ENCODE measurements at regions of chr1 and their contacts with region 1.

Region 1: GRCh38 chr1:185987611-185988321 is 253.6 kb downstream of the HMCN1 start:
- DNase-seq: peak; percentile 44
- H3K4me3 Mint-ChIP-seq: peak overlapping the region; percentile 69
- H3K27ac Mint-ChIP-seq: peak overlapping the region; percentile 98
- H3K4me1 Mint-ChIP-seq: peaks cover 15% of the 10 kb centered on the region
- H3K27me3 Mint-ChIP-seq: no peaks in the 10 kb centered on the region

Region 2: DNA sequence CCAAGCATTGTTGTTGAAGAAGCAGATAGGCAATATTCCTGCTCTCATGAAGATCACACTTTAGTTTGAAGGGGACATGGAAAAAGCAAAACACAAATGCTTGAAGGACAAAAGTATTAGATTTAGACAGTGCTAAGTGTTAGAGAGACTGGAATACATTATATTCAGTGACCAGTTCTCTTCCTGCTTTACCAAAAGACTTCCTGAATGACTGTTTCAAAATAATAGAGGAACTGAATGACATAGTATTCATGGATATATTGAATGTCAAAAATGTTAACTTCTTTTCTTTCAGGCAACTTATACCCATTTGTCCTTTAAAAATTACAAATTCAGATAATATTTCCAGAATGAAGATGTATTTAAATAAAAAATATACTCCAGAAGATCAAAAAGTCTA is 492.8 kb before region 1 on chr1:
- CTCF ChIA-PET with region 1: no interaction called
- intact Hi-C with region 1: no loop called
- DNase-seq: no peak
- H3K4me3 Mint-ChIP-seq: no peak overlapping the region
- H3K27ac Mint-ChIP-seq: no peak overlapping the region
- H3K4me1 Mint-ChIP-seq: peaks cover 4% of the 10 kb centered on the region
- H3K27me3 Mint-ChIP-seq: no peaks in the 10 kb centered on the region

Region 3: GRCh38 chr1:185585770-185586169 is 402.0 kb before region 1 on chr1:
- CTCF ChIA-PET with region 1: no interaction called
- intact Hi-C with region 1: no loop called
- DNase-seq: no peak
- H3K4me3 Mint-ChIP-seq: no peak overlapping the region
- H3K27ac Mint-ChIP-seq: no peak overlapping the region
- H3K4me1 Mint-ChIP-seq: no peaks in the 10 kb centered on the region
- H3K27me3 Mint-ChIP-seq: no peaks in the 10 kb centered on the region

Region 4: GRCh38 chr1:186009039-186009737 is 21.4 kb after region 1 on chr1:
- CTCF ChIA-PET with region 1: no interaction called
- intact Hi-C with region 1: loop called (anchors 1 kb)
- DNase-seq: no peak
- H3K4me3 Mint-ChIP-seq: no peak overlapping the region
- H3K27ac Mint-ChIP-seq: peak overlapping the region; percentile 53
- H3K4me1 Mint-ChIP-seq: peaks cover 4% of the 10 kb centered on the region
- H3K27me3 Mint-ChIP-seq: no peaks in the 10 kb centered on the region

Region 5: DNA sequence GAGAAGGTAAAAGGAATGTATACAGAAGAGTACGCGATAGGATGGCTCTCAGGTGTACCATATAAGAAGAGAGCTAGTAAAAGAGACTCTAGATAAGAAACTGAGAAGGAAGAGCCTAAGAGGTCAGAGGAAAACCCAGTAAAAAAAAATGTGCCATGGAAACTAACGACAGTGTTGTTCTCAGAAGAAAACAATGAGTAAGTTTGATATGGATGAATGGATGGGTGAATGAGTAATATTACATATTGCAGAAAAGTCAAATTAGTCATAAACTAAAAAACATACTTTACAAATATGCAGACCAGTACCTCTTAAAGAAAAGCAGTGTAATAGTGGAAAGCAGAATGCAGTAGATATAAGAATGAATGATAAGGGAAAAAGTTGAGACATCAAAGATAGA is 62.6 kb after region 1 on chr1:
- CTCF ChIA-PET with region 1: no interaction called
- intact Hi-C with region 1: loop called (anchors 1 kb)
- DNase-seq: no peak
- H3K4me3 Mint-ChIP-seq: no peak overlapping the region
- H3K27ac Mint-ChIP-seq: no peak overlapping the region
- H3K4me1 Mint-ChIP-seq: peaks cover 7% of the 10 kb centered on the region
- H3K27me3 Mint-ChIP-seq: peaks cover 3% of the 10 kb centered on the region

Region 6: DNA sequence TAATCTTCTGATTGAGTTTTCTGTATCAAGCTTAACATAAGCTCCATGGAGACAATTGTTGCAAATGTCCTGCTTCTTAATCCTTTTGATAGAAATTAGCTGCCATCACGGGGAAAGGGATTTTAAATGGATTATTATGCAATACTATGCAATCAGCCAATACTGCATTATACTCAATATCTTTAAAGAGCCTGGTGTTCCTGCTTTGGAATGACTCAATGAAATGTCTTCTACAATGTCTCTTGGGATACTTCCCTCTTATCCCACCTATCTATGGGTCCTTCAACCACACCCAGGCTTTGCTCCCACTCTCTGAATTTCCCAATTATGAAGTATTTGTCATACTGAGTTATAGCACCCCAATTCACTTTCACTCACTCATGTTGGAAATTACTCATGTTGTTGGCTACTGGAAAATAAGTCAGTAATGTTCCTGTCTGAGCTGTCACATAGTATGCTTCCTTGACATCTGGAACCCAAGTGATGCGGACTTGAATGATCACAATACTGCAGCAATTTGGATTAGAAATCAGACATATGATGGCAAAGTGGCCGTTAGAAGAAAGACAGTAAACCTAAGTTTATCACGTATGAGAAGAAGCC is 302.3 kb after region 1 on chr1:
- CTCF ChIA-PET with region 1: no interaction called
- intact Hi-C with region 1: loop called (anchors 1 kb)
- DNase-seq: peak; percentile 55
- H3K4me3 Mint-ChIP-seq: peak overlapping the region; percentile 43
- H3K27ac Mint-ChIP-seq: peak overlapping the region; percentile 99
- H3K4me1 Mint-ChIP-seq: peaks cover 90% of the 10 kb centered on the region
- H3K27me3 Mint-ChIP-seq: no peaks in the 10 kb centered on the region